ENCODE measurements at regions of chr7 and their contacts with region 1.

Region 1: GRCh38 chr7:149771721-149772240 is 1.6 kb downstream of the ZNF467 start:
- DNase-seq: peak; percentile 96
- ATAC-seq: peak; percentile 96

Region 2: GRCh38 chr7:149838224-149838947 is 66.6 kb after region 1 on chr7 and contains the start of gene ZNF862:
- intact Hi-C with region 1: loop called (anchors 2 kb)
- DNase-seq: peak; percentile 99
- ATAC-seq: peak; percentile 99
- total RNA-seq, gene ZNF862: 10.1 TPM